PC-3 (cell line): ENCODE measurements at regions of chr22 and their contacts with region 1.

Region 1: DNA sequence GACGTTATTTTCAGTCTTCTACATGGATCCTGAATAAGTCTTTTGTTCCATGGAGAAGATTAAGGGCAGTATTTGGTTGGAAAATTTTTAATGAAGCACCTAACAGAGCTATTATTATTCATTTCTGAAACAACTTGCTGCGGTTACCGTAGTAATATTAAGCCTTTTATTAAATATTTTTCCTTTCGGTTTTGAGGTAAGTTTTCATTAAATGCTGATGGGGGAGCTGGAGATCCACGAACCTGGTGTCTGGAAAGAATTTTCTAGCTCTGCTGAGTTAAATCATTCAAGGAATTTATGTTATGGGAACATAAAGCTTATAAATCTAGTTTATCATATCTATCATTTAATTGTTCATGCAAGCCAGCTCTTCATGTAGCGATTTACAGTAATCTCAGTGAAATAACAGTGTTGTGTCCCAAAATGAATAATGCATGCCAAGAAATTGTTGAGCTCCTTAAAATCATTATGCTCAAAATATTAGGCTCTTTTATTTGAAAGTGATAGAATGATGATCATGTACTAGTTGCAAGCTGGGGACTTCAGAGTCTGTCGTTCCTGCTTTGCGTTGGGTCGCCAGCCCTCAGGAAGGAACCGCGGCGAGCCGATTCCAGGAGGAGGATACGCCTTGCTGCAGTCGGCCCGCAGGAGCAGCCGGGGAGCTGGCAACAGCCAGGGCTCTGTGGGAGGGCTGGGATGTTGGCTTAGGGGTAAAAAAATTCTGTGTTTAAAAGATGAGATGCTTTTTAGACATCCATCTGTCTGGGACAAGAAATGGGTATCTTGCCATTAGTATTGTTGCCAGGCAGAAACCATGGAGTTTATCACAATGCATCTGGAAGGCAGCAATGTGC is 83.1 kb downstream of the TBC1D22A start:
- DNase-seq: peak; percentile 38
- ATAC-seq: peak; percentile 35
- H3K4me3 ChIP-seq: peak overlapping the region; percentile 49; the same call in 1 of the 2 replicates
- H3K27ac ChIP-seq: peak overlapping the region; percentile 18
- H3K4me1 ChIP-seq: peaks cover 27% of the 10 kb centered on the region
- H3K27me3 ChIP-seq: no peaks in the 10 kb centered on the region
- CTCF ChIP-seq: peak; percentile 68

Region 2: DNA sequence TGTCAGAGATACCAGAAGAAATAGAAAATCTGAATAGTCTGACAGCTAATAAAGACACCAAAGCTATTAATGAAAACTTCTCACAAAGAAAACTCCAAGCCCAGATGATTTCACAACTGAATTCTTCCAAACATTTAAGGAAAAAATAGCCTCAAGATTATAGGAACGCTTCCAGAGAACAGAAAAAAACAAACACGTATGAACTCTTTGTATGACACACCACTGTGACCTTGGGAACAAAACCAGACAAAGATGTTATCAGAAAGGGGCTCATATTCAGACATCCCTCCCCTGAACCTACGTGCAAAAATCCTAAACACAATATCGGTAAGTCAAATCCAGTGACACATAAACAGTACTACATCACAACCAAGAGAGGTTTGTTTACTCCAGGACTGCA is 131.0 kb before region 1 on chr22:
- CTCF ChIA-PET with region 1: no interaction called
- POLR2A ChIA-PET with region 1: no interaction called
- intact Hi-C with region 1: no loop called
- DNase-seq: no peak
- ATAC-seq: no peak
- H3K4me3 ChIP-seq: no peak overlapping the region
- H3K27ac ChIP-seq: no peak overlapping the region
- H3K4me1 ChIP-seq: no peaks in the 10 kb centered on the region
- H3K27me3 ChIP-seq: no peaks in the 10 kb centered on the region
- CTCF ChIP-seq: no peak

Region 3: DNA sequence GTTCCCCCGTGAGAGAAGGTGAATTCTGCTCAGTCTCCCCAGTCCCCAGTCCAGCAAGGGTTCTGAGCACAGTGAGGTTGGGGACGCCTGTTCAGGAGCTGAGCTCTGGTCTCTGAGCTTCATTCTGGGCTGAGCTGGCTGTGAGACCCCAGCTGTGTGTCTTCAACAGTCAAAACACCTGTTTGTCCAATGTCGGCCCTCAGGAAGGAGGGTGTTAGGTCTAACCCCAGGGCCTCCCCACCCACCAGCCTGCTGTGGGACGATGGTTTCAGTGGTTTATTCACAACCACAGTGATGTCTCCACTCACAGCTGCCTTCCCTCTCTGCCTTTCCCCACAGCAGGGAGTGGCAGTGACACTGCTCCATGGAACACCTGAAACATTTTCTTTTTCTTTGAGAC is 1199.8 kb after region 1 on chr22:
- CTCF ChIA-PET with region 1: no interaction called
- POLR2A ChIA-PET with region 1: interaction called, 20 read pairs
- intact Hi-C with region 1: no loop called
- DNase-seq: no peak
- ATAC-seq: no peak
- H3K4me3 ChIP-seq: no peak overlapping the region
- H3K27ac ChIP-seq: no peak overlapping the region
- H3K4me1 ChIP-seq: no peaks in the 10 kb centered on the region
- H3K27me3 ChIP-seq: no peaks in the 10 kb centered on the region
- CTCF ChIP-seq: no peak